ENCODE measurements at regions of chr15 and their contacts with region 1.

Region 1: GRCh38 chr15:43903864-43904290 is 77.1 kb downstream of the WDR76 start:
- DNase-seq: peak; percentile 25
- H3K4me3 ChIP-seq: no peak overlapping the region
- H3K27ac ChIP-seq: no peak overlapping the region
- H3K4me1 ChIP-seq: no peaks in the 10 kb centered on the region
- H3K27me3 ChIP-seq: no peaks in the 10 kb centered on the region
- CTCF ChIP-seq: peak; percentile 67 to 87 (median 74)
- POLR2A ChIP-seq: no peak

Region 2: GRCh38 chr15:43948691-43949325 is 44.9 kb after region 1 on chr15:
- intact Hi-C with region 1: no loop called
- DNase-seq: no peak
- H3K4me3 ChIP-seq: no peak overlapping the region
- H3K27ac ChIP-seq: no peak overlapping the region
- H3K4me1 ChIP-seq: no peaks in the 10 kb centered on the region
- H3K27me3 ChIP-seq: no peaks in the 10 kb centered on the region
- CTCF ChIP-seq: no peak
- POLR2A ChIP-seq: no peak

Region 3: GRCh38 chr15:44066316-44066740 is 162.5 kb after region 1 on chr15:
- intact Hi-C with region 1: loop called (anchors 10 kb)
- DNase-seq: peak; percentile 39
- H3K4me3 ChIP-seq: no peak overlapping the region
- H3K27ac ChIP-seq: no peak overlapping the region
- H3K4me1 ChIP-seq: no peaks in the 10 kb centered on the region
- H3K27me3 ChIP-seq: no peaks in the 10 kb centered on the region
- CTCF ChIP-seq: peak; percentile 46 to 72 (median 54)
- POLR2A ChIP-seq: no peak

Region 4: DNA sequence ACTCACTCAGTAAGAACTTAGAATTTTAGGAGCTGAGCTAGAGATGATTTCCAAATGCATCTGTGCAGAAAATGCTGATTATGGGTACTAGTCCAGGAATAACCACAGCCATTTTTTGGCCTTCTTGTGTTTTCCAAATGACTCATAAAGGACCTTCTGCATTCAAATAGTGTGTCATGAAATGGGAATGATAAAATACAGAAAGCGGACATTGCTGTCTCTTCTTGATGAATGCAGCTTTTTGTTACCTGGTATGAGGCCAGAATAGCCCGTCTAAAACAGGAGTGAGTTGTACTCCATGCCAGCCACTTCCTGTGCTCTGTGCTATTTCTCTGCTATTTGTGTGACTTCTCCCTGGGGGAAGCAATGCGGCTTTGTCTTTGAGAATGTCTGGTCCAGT is 311.7 kb after region 1 on chr15:
- intact Hi-C with region 1: loop called (anchors 5 kb)
- DNase-seq: no peak
- H3K4me3 ChIP-seq: no peak overlapping the region
- H3K27ac ChIP-seq: no peak overlapping the region
- H3K4me1 ChIP-seq: no peaks in the 10 kb centered on the region
- H3K27me3 ChIP-seq: no peaks in the 10 kb centered on the region
- CTCF ChIP-seq: no peak
- POLR2A ChIP-seq: no peak

Region 5: DNA sequence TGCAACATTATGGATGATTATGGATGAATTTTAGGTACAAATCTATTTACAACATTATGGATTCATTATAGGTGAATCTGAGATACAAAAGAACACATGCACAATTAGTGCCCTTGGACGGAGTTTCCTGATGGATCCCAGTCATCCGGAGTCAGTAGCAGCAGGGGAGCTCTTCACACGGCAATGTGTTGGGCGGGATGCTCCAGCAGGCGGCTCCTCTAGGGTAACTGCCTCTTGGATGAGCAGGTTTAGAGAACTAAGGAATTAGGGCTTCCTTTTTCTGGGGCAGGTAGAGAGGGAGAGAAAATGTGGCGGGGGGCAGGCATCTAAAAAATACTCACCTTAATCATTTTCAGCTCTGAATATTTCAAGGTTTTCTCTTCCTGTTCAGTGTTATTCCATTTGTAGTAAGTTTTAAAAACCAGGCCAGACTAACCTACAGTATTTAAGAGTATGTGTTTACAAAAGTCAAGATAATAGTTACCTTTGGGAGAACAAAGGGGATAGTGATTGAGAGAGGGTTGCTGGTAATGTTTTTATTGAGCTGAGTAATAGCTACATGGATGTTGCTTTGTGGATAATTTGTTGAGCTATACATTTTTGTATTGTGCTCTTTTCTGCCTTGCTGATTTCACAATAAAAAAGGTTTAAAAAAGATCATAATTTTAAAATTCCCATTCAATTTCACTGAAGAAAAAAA is 357.3 kb after region 1 on chr15:
- intact Hi-C with region 1: no loop called
- DNase-seq: no peak
- H3K4me3 ChIP-seq: no peak overlapping the region
- H3K27ac ChIP-seq: no peak overlapping the region
- H3K4me1 ChIP-seq: no peaks in the 10 kb centered on the region
- H3K27me3 ChIP-seq: no peaks in the 10 kb centered on the region
- CTCF ChIP-seq: no peak
- POLR2A ChIP-seq: no peak

Measured in prostate gland (tissue), 2 donors.